Astrocyte of the cerebellum (primary cell): ENCODE measurements at regions of chr9 and their contacts with region 1.

Region 1: DNA sequence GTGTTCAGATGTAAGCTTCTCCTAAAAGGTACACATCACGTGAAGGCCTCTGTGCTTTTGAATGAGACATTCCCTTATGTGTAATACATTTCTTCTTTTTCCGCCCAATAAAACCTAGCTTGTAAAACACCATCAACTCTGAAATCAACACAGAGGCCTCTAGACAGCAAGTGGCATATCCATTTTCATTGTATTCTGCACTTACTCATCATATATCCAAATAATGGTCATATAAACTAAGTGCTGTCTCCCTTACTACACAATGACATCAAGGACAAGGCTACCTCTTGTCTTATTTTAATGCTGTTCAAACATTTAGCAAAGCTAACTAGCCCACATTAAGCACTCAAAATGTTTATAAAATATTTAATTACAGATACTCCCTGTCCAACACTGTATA is 108.5 kb downstream of the ELAVL2 start:
- DNase-seq: no peak
- H3K4me3 ChIP-seq: no peak overlapping the region
- CTCF ChIP-seq: no peak

Region 2: DNA sequence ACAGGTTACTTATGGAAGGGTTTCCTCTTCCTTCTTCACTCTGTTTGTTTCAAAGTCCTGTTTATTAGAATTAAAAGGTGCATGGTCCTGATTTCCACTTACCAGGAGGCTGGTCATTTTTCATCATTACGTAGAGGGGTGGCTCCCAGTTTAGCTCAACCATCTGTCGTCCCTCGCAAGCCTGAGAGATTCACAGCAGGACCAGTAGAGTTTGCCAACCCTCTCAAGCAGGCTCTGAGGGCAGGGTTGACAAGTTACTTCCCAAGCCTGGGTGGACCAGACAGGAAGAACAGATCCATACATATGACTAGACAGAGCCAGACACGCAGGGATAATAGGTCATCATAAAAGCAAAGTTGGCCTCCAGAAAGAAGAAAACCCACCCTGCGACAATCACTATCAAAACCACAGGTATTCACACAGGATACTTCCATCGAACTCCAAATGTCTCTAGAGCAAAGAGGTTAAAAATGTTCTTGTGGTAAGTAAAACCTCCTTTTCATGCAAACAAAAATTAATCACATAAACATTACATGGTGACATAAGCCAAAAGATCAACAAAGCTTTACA is 43.4 kb before region 1 on chr9:
- in situ Hi-C with region 1: loop called (anchors 5 kb)
- DNase-seq: no peak
- H3K4me3 ChIP-seq: no peak overlapping the region
- CTCF ChIP-seq: no peak

Region 3: GRCh38 chr9:23764219-23764618 is 46.7 kb after region 1 on chr9:
- in situ Hi-C with region 1: loop called (anchors 5 kb)
- DNase-seq: no peak
- H3K4me3 ChIP-seq: no peak overlapping the region
- CTCF ChIP-seq: no peak